Panc1 (cell line): ENCODE measurements at regions of chr12 and their contacts with region 1.

Region 1: DNA sequence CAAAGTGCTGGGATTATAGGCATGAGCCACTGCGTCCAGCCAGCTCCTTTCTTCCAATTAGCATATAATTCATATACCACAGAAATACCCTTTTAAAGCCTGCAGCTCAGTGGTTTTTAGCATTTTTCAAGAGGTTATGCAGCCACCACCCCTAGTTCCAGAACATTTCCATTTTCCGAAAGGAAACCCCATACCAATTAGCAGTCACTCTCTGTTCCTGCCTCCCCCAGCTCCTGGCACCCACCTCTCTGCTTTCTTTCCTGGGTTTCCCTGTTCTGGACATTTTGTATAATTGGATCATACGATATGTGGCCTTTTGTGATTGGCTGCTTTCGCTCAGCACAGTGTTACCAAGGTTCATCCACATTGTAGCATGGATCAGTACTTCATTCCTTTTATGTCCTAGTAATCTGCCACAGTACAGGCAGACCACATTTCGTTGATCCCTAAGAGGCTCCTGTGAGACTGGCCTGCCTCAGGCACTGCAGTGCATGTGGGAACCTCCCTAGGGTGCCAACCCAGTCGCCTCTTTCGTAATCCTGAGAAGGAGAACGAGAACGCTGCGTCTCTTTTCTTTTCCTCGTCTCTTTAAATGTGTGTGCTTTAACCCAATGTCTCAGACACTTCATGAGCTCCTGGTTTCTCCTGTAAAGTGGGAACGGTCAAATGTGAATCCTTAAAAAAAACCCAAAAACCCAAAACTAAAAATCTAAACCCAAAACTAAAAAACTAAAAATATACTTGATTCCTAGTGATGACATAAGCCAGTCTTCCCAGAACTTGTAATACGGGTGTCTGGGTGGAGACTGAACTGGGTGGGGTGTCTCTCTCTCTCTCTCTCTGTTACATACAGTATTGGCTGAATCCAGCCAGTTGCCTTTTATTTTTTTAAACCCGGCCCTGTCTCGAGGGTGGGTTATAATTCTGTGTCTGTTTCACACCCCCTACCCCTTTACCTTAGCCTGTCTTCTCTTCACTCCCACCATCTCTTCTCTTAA is 14.7 kb downstream of the AACS start:
- DNase-seq: no peak
- ATAC-seq: no peak; the same call in 1 of the 2 replicates
- H3K4me3 ChIP-seq: no peak overlapping the region
- H3K27ac ChIP-seq: no peak overlapping the region
- H3K4me1 ChIP-seq: no peaks in the 10 kb centered on the region
- H3K27me3 ChIP-seq: no peaks in the 10 kb centered on the region
- CTCF ChIP-seq: no peak

Region 2: DNA sequence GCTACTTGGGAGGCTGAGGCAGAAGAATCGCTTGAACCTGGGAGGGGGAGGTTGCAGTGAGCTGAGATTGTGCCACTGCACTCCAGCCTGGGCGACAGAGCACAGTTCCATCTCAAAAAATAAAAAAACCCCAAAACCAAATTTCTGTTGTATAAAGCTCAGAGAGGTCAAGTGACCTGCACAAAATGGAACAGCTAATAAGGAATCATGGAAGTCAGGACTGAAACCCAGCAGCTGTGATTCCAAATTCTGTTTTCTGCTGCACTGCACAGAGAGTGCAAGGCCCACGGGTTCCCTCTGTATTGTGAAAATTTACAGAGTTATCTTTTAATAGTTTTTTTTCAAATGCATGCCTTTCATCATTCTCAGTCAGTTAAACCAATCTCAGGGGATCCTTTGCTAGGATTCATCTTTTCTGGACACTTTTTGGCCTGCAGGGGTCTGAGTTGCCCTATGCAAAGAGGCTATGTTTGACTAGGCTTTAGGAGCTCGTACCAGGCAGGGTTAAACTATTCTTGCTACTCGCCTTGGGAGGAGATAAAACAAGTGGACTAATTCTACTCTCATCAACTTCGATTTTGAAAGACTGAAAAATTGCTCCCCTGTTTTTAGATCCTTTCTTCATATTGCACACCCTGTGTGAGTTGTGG is 40.8 kb before region 1 on chr12:
- CTCF ChIA-PET with region 1: no interaction called
- POLR2A ChIA-PET with region 1: interaction called, 11 read pairs
- in situ Hi-C with region 1: no loop called
- intact Hi-C with region 1: no loop called
- DNase-seq: no peak
- ATAC-seq: no peak; the same call in 1 of the 2 replicates
- H3K4me3 ChIP-seq: no peak overlapping the region
- H3K27ac ChIP-seq: no peak overlapping the region
- H3K4me1 ChIP-seq: no peaks in the 10 kb centered on the region
- H3K27me3 ChIP-seq: no peaks in the 10 kb centered on the region
- CTCF ChIP-seq: no peak